GM13977 (cell line): ENCODE measurements at regions of chr6 and their contacts with region 1.

Region 1: GRCh38 chr6:35736253-35736894 is 458 bp upstream of the ARMC12 start:
- DNase-seq: peak; percentile 81
- CTCF ChIP-seq: peak; percentile 92

Region 2: DNA sequence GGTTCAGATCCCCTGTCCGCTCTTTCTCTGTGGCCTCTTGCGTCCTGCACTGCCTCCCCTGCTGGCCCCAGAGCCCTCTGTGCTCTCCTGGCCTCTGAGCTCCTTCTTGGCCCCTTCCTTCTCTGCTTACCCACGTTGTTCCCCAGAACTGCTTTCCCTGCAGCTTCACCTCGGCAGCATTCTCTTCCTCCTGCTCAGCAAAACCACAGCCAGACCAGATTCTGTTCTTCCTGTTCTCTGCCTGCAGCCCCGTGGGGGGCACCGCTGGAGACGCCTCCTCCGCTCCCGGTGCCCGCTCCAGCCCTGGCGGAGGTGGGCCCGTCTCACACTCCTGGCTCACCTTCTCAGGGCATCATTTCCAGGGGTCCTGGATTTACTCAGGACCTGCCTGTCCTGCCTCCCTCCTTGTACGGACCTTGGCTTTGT is 654.9 kb before region 1 on chr6:
- in situ Hi-C with region 1: no loop called
- DNase-seq: no peak
- CTCF ChIP-seq: no peak

Region 3: GRCh38 chr6:35583893-35584688 is 152.3 kb before region 1 on chr6:
- in situ Hi-C with region 1: loop called (anchors 5 kb)
- DNase-seq: peak; percentile 44
- CTCF ChIP-seq: peak; percentile 81

Region 4: DNA sequence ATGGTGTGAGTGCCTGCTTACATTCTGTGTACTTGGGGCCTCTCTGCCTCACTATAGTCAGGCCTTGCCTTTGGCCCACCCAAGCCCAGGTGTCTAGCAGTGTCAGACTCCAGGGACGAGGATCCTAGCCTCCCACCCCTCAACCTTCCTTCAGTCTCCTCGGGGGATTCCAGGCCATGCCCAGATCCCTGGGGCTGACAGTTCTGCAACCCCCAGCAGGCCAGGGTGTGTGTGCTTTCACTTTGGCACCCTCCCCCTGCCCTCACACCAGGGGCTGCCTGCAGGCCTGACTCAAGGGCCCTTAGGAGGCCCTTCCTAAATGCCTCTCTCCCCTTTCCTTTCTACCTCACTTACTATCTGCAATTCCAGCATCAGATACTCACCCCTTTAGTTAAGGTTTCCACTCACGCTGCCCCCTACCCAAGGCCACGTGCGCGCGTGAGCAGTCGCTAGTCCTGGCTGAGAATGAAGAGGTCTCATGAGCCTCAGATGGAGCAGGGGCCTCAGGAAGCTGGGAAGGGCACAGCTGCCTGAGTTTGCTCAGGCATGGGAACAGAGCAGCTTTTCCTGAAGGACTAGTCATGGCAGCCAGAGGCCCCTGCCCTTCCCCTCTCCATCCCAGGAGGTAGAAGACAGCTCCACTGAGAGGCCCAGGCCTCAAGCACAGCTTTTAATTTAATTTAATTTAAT is 61.6 kb after region 1 on chr6:
- in situ Hi-C with region 1: no loop called
- DNase-seq: no peak
- CTCF ChIP-seq: no peak

Region 5: DNA sequence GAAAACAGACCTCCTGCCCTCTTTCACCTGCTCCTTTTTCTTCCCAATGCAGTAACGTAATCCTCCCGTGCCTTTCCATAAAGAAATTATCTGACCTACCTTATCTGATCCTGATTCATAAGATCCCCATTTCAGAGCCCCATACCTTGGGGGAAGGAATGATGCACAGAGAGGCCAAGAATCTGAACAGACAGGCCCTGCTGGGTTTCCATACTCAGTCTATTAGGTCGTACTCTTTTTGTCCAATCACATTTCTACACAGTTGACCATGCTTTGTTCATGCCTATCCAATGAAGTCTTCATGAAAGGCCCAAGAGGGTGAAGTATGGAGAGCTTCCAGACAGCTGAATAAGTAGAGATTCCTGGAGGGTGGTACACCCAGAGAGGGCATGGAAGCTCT is 159.2 kb after region 1 on chr6:
- in situ Hi-C with region 1: no loop called
- DNase-seq: no peak
- CTCF ChIP-seq: no peak